Right cardiac atrium (tissue), 5 donors: ENCODE measurements at regions of chr20 and their contacts with region 1.

Region 1: GRCh38 chr20:1094751-1095150 is 23.7 kb upstream of the PSMF1 start:
- DNase-seq: no peak
- ATAC-seq: no peak
- H3K4me3 ChIP-seq: no peak overlapping the region
- H3K27ac ChIP-seq: no peak overlapping the region
- H3K4me1 ChIP-seq: no peaks in the 10 kb centered on the region
- H3K27me3 ChIP-seq: no peaks in the 10 kb centered on the region

Region 2: GRCh38 chr20:1038205-1038604 is 56.5 kb before region 1 on chr20:
- intact Hi-C with region 1: loop called in 1 of 4 experiments (anchors 2 kb)
- DNase-seq: no peak
- ATAC-seq: no peak
- H3K4me3 ChIP-seq: no peak overlapping the region
- H3K27ac ChIP-seq: no peak overlapping the region
- H3K4me1 ChIP-seq: no peaks in the 10 kb centered on the region
- H3K27me3 ChIP-seq: no peaks in the 10 kb centered on the region